ENCODE measurements at regions of chr12 and their contacts with region 1.

Region 1: DNA sequence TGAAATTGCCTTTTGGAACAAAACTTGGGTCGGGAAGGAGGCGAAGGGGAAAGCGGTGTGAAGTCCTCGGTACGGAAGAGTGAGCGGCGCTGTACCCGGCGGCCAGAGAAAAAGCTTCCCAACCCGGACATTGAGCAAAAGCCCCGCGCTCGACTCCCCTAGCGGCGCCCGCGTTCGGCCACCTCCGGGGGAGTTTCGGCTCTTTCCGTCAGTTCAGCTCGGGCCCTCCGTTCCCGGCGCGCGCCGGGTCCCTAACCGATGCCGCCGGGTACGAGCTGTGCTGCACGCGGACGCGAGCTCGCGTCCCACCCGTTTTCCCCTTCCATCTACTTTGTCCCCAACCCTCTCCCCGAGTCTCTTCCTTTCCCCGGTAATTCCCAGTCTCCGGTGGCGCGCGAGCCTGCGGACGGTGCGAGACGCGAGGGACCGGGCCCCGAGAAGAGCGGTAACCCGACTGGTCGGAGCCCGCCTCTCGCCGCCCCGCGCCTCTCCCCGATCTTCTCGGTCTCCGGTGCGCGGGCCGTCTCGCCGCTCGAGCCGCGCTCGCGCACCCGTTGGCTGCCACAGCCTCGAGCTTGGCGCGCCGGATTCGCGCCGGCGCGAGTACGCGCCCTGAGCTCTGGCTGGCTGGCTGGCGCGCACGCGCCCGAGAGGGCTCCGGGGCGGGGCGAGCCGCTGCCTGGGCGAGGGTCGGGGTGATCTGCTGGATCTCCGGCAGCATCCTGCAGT is 446 bp upstream of the SPATS2 start:
- DNase-seq: peak; percentile 73 to 80
- ATAC-seq: peak; percentile 86
- H3K4me3 ChIP-seq: peak overlapping the region; percentile 82 to 98 (median 87)
- H3K27ac ChIP-seq: peak overlapping the region; percentile 96 to 98 (median 97)
- H3K4me1 ChIP-seq: peaks cover 27 to 30% of the 10 kb centered on the region in 2 donors
- H3K27me3 ChIP-seq: no peaks in the 10 kb centered on the region
- CTCF ChIP-seq: peak in 3 of 5 experiments; percentile 28 to 58 (median 50)
- POLR2A ChIP-seq: peak; percentile 80 to 85

Region 2: DNA sequence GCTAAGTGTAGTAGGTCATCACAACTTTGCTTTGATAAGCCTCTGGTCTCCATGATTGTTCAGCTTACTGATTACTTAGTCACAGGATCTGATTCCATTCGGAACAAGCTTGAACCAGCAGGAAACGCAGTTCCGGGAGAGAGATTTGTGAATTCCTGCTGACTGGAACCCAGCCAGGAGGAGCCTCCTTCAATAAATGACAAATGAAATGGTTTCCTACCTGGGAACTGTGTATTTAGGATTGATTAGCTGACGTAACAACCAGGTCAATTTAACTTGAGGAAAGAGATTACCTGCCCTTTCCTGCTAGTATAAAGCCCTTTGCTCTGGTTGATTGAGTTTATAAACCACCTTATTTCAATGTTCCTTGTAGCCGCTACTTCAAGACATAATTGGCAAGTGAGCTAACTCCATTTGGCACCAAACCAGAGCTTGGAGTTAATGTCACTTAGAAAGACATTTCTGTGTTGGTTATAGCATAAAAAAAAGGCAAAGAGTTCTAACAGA is 136.9 kb after region 1 on chr12:
- in situ Hi-C with region 1: loop called in 1 of 4 experiments (anchors 10 kb)
- intact Hi-C with region 1: no loop called
- DNase-seq: no peak
- ATAC-seq: no peak
- H3K4me3 ChIP-seq: no peak overlapping the region
- H3K27ac ChIP-seq: peak overlapping the region in 1 of 4 donors; percentile 8
- H3K4me1 ChIP-seq: no peaks in the 10 kb centered on the region
- H3K27me3 ChIP-seq: no peaks in the 10 kb centered on the region
- CTCF ChIP-seq: no peak
- POLR2A ChIP-seq: no peak

Region 3: GRCh38 chr12:49515266-49515665 is 148.4 kb after region 1 on chr12:
- in situ Hi-C with region 1: loop called in 2 of 4 experiments (anchors 5 kb)
- intact Hi-C with region 1: no loop called
- DNase-seq: no peak
- ATAC-seq: no peak
- H3K4me3 ChIP-seq: no peak overlapping the region
- H3K27ac ChIP-seq: no peak overlapping the region
- H3K4me1 ChIP-seq: no peaks in the 10 kb centered on the region
- H3K27me3 ChIP-seq: no peaks in the 10 kb centered on the region
- CTCF ChIP-seq: no peak
- POLR2A ChIP-seq: no peak

Region 4: DNA sequence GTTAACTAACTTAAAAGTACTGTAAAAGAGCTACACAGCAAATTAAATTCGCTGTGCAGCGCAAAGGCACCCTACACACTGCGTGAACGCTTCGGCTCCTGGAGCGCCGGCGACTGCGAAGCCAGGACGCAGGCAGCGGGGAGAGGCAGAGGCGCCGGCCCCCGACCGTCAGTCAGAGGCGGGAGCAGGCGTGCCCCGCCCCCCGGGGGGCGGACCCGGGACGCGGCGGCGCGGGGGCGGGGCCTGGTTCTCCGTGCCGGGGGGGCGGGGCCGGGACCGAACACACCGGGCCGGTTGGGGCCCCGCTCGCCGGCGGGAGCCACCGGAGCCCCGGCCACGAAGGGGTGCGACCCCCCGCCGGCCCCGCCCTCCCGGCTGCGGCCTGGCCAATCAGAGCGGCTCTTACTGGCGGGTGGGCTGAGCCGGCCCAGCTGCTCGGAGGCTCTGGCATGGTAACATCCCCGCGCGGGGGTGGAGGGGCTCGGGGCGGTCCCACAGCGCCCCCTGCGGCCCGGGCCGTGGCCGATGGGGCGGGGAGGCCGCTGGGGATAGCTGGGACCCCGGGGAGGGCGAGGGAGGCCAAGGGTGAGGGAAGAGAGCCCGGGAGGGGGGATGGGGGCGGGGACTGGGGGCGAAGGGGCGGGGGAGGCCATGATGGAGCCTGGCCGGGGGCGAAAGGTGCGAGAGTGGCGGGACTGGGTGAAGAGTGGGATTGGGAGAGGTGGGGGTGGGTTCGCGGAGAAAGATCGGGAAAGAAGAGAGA is 256.5 kb after region 1 on chr12 and contains the start of gene PRPF40B:
- in situ Hi-C with region 1: no loop called
- intact Hi-C with region 1: loop called (anchors 1 kb)
- DNase-seq: peak; percentile 80 to 90
- ATAC-seq: peak; percentile 87 to 88
- H3K4me3 ChIP-seq: peak within 1 kb of the TSS; percentile 52 to 84 (median 65)
- H3K27ac ChIP-seq: peak within 1 kb of the TSS; percentile 80 to 91 (median 84)
- H3K4me1 ChIP-seq: peaks cover 11 to 15% of the 10 kb centered on the region in 2 donors
- H3K27me3 ChIP-seq: no peaks in the 10 kb centered on the region
- CTCF ChIP-seq: peak; percentile 36 to 65 (median 54)
- POLR2A ChIP-seq: peak; percentile 91 to 94
- total RNA-seq, gene PRPF40B: 17.6 to 21.3 (median 20.2) TPM

Measured in gastrocnemius medialis (tissue), 4 donors.